Kidney (tissue), 22 donors: ENCODE measurements at regions of chr15 and their contacts with region 1.

Region 1: DNA sequence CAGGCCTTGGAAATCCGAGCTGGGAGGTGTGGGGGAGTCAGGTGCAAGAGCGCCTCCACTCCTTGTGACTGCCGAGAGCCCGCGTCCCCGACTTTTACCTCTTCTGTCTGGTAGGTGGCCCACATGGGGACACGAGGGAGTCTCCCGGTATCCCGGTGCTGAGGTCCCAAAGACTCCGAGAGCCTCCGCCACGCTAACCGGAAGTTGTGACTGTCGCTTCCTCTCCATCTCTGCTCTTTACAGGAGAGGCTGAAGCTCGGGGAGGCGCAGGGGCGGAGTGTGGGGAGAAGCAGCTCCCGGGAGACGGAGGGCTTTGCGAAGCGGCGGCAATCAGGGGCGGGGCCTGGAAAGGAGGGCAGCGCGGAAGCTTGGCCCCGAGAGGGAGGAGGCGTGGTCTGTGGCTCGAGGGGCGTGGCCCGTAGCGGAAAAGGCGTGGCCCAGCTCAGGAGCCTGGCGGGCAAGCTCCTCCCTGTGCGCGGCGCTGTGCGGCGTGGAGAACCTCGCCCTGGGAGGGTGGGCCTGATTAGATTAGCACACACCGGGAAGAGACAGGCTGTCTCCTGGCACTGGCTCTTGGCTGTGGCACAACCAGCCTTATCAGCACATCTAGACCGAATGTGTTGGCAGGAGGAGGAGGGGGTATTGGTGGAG is 143.9 kb downstream of the GABRB3 start:
- DNase-seq: peak; percentile 48 to 85 (median 65)
- H3K4me3 ChIP-seq: peak overlapping the region in 2 of 3 donors; percentile 7 to 39
- H3K27ac ChIP-seq: no peak overlapping the region
- H3K4me1 ChIP-seq: no peaks in the 10 kb centered on the region
- H3K27me3 ChIP-seq: no peaks in the 10 kb centered on the region
- CTCF ChIP-seq: no peak

Region 2: DNA sequence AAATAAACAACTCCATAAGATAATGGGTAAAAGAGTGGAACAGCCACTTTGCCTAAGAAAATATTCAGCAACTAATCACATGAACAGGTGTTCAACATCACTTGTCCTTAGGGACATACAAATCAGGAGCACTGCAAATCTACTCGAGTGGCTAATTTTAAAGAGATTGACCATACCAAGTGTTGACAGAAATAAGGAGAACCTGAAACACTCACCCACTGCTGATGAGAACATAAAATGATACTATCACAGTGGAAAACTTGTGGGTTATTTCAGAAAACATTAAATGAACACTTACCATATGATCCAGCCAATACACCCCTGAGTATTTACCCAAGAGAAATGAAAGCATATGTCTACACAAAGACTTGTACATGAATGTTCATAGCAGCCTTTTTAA is 73.4 kb after region 1 on chr15:
- intact Hi-C with region 1: loop called (anchors 10 kb)
- DNase-seq: no peak
- H3K4me3 ChIP-seq: no peak overlapping the region
- H3K27ac ChIP-seq: no peak overlapping the region
- H3K4me1 ChIP-seq: no peaks in the 10 kb centered on the region
- H3K27me3 ChIP-seq: no peaks in the 10 kb centered on the region
- CTCF ChIP-seq: no peak

Region 3: DNA sequence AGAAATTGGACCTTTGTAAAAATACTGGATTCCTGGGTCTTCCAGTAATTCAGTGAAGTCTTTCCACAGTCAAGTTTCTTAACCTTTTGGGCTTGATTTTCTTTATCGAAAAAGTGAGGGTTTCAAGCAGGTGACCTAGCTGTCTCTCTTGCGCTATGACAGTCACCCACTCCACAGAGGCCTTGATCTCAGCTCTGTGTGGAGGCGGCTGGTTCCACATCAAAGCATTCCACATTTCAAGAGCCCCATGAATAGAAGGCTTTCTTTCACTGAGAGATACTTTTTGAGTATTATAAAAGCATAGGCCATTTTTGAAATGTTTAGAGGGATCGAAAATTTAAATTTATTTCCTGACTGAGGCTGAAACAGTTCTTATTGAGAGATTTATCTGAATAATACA is 281.7 kb after region 1 on chr15:
- intact Hi-C with region 1: no loop called
- DNase-seq: no peak
- H3K4me3 ChIP-seq: no peak overlapping the region
- H3K27ac ChIP-seq: no peak overlapping the region
- H3K4me1 ChIP-seq: no peaks in the 10 kb centered on the region
- H3K27me3 ChIP-seq: no peaks in the 10 kb centered on the region
- CTCF ChIP-seq: no peak